HAP-1 (cell line): ENCODE measurements at regions of chr2 and their contacts with region 1.

Region 1: GRCh38 chr2:228401065-228401912 is 219.8 kb upstream of the SPHKAP start:
- DNase-seq: peak; percentile 14 to 23
- H3K4me3 ChIP-seq: no peak overlapping the region
- H3K4me1 ChIP-seq: no peaks in the 10 kb centered on the region
- H3K27me3 ChIP-seq: no peaks in the 10 kb centered on the region

Region 2: GRCh38 chr2:228669690-228670089 is 268.4 kb after region 1 on chr2:
- in situ Hi-C with region 1: loop called (anchors 10 kb)
- DNase-seq: no peak
- H3K4me3 ChIP-seq: no peak overlapping the region
- H3K4me1 ChIP-seq: no peaks in the 10 kb centered on the region
- H3K27me3 ChIP-seq: no peaks in the 10 kb centered on the region